Naive thymus-derived CD4-positive, alpha-beta T cell (primary cell): ENCODE measurements at regions of chr3 and their contacts with region 1.

Region 1: DNA sequence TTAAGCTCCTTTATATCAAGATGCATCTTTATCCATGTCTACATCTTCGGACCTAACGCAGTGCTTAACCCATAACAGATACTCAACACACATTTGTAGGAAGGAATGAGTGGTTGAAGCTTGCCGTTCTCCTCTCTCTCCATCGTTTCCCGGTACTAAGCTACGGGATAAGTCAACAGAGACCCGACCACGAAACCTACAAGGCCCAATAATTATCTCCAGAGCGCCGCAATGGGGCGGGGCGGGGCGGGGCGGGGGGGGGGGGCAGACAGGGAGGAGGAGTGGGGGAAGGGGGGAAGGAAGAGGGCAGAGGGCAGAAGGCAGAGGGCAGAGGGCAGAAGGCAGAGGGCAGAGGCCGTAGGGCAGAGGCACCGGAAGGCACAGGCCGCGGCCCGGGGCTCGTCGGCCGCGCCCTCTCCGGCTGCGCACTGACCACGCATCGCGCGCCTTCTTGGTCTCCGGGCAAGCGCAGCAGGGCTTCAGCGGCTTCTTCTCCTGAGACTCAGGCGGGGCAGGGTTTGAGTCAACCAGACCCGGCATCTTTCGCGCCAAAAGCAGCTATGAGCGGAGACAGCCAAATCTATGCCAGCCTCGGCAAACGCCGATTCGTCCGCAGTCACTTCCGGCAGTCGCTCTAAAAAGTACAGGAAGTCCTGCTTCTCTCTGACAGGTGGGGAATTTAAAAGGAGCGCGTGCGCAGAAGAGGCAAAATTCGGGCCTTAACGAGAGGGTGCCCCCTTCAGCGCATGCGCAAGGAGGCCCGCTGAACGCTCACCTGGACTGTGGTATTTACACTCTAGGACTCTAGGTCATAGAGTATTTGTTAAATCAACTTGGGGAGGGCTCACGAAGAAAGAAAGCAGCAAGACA is at the start of gene COX17:
- DNase-seq: peak; percentile 87 to 98 (median 96)
- ATAC-seq: peak; percentile 91
- H3K4me3 ChIP-seq: peak within 1 kb of the TSS; percentile 62
- H3K4me3 Mint-ChIP-seq: peak within 1 kb of the TSS; percentile 78 to 98 (median 90)
- H3K27ac ChIP-seq: peak within 1 kb of the TSS; percentile 72
- H3K27ac Mint-ChIP-seq: peak within 1 kb of the TSS; percentile 94 to 99 (median 96)
- H3K4me1 ChIP-seq: peaks cover 14 to 16% of the 10 kb centered on the region in 2 donors
- H3K4me1 Mint-ChIP-seq: peaks cover 19 to 46% (median 41%) of the 10 kb centered on the region in 7 donors
- H3K27me3 ChIP-seq: no peaks in the 10 kb centered on the region
- H3K27me3 Mint-ChIP-seq: peaks cover 0 to 3% (median 0%) of the 10 kb centered on the region in 5 donors
- total RNA-seq, gene COX17: 25.6 to 55.0 (median 34.8) TPM

Region 2: GRCh38 chr3:118884748-118885206 is 792.2 kb before region 1 on chr3:
- CTCF ChIA-PET with region 1: interaction called, 6 read pairs
- POLR2A ChIA-PET with region 1: no interaction called
- intact Hi-C with region 1: loop called (anchors 1 kb)
- DNase-seq: peak; percentile 58 to 83 (median 76)
- ATAC-seq: peak; percentile 88
- H3K4me3 ChIP-seq: no peak overlapping the region
- H3K4me3 Mint-ChIP-seq: peak overlapping the region in 5 of 10 donors; percentile 21 to 63 (median 40)
- H3K27ac ChIP-seq: no peak overlapping the region
- H3K27ac Mint-ChIP-seq: no peak overlapping the region
- H3K4me1 ChIP-seq: no peaks in the 10 kb centered on the region
- H3K4me1 Mint-ChIP-seq: peaks cover 0 to 18% (median 7%) of the 10 kb centered on the region in 7 donors
- H3K27me3 ChIP-seq: no peaks in the 10 kb centered on the region
- H3K27me3 Mint-ChIP-seq: peaks cover 8 to 16% (median 11%) of the 10 kb centered on the region in 5 donors

Region 3: GRCh38 chr3:119145500-119146191 is 531.4 kb before region 1 on chr3 and contains the start of gene TEX55:
- CTCF ChIA-PET with region 1: no interaction called
- POLR2A ChIA-PET with region 1: no interaction called
- intact Hi-C with region 1: loop called (anchors 1 to 2 kb)
- DNase-seq: peak in 7 of 9 donors; percentile 19 to 48 (median 34)
- ATAC-seq: peak; percentile 57
- H3K4me3 ChIP-seq: no peak within 1 kb of the TSS
- H3K4me3 Mint-ChIP-seq: no peak within 1 kb of the TSS
- H3K27ac ChIP-seq: no peak within 1 kb of the TSS
- H3K27ac Mint-ChIP-seq: peak within 1 kb of the TSS in 2 of 9 donors; percentile 9 to 12
- H3K4me1 ChIP-seq: no peaks in the 10 kb centered on the region
- H3K4me1 Mint-ChIP-seq: peaks cover 0 to 8% (median 5%) of the 10 kb centered on the region in 7 donors
- H3K27me3 ChIP-seq: no peaks in the 10 kb centered on the region
- H3K27me3 Mint-ChIP-seq: no peaks in the 10 kb centered on the region
- total RNA-seq, gene TEX55: not detected

Region 4: DNA sequence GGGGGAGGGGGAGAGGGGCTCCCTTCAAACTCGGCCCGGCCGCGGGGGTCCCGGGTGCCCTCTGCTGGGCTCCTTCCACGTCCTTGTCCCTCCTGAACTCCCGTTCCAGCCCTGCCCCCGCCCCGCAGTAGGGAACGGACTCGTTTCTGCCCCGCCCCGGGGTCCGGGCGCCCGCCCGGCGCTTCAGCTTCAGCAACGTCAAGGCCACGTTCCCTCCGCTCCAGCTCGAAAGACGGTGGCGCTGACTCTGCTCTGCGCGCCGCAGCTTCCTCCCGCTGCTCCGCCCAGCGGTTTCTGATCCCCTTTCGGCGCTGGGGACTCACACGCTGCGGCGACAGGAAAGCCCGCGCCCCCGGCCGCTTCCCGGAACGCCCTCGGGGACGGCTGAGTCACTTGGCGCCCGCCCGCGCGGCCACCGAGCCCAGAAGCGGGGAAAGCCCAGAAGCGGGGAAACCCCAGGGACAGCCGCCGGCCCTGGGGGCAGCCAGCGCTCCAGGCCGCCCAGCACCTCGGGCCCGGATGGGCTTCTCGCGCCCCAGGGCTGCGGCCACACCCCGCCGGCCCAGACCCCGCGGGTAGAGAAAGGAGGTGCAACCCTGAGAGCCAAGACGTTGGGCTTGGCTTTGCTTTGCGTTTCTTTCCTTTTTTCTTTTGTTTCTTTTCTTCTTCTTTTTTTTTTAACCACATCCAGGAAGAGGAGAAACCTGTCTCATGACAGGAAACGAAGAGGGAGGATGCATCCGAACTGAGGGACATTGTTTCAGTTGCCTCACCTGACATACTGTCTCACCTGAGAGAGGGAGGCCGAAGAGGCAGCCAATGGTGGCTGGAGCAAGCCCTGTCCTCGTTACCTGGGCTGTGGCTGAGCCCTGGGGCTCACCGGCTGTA is 353.9 kb before region 1 on chr3:
- CTCF ChIA-PET with region 1: no interaction called
- POLR2A ChIA-PET with region 1: no interaction called
- intact Hi-C with region 1: loop called in 1 of 2 experiments (anchors 1 kb)
- DNase-seq: peak; percentile 77 to 96 (median 81)
- ATAC-seq: peak; percentile 90
- H3K4me3 ChIP-seq: peak overlapping the region; percentile 65
- H3K4me3 Mint-ChIP-seq: peak overlapping the region; percentile 84 to 96 (median 90)
- H3K27ac ChIP-seq: peak overlapping the region; percentile 81
- H3K27ac Mint-ChIP-seq: peak overlapping the region; percentile 90 to 99 (median 95)
- H3K4me1 ChIP-seq: peaks cover 10 to 14% of the 10 kb centered on the region in 2 donors
- H3K4me1 Mint-ChIP-seq: peaks cover 12 to 30% (median 21%) of the 10 kb centered on the region in 7 donors
- H3K27me3 ChIP-seq: no peaks in the 10 kb centered on the region
- H3K27me3 Mint-ChIP-seq: peaks cover 0 to 57% (median 0%) of the 10 kb centered on the region in 5 donors

Region 5: DNA sequence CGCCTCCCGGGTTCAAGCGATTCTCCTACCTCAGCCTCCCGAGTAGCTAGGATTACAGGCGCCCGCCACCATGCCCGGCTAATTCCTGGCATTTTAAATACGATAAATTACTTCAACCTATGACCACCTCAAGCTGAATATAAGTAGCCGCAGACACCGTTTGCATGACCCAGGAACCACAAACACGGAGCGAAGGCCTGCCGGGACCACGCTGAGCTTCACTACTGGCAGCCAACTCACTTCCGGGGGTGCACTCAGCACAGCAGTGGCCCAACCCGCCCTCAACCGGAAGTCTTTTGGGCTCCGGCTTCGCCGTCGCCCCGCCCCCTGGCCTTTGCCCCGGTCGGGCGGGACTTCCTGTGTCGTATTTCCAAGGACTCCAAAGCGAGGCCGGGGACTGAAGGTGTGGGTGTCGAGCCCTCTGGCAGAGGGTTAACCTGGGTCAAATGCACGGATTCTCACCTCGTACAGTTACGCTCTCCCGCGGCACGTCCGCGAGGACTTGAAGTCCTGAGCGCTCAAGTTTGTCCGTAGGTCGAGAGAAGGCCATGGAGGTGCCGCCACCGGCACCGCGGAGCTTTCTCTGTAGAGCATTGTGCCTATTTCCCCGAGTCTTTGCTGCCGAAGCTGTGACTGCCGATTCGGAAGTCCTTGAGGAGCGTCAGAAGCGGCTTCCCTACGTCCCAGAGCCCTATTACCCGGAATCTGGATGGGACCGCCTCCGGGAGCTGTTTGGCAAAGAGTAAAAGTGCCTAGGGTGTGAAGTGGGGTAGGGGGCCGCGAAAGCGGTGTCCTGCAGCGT is 178.6 kb before region 1 on chr3 and contains the start of gene TIMMDC1:
- CTCF ChIA-PET with region 1: no interaction called
- POLR2A ChIA-PET with region 1: interaction called, 3 read pairs
- intact Hi-C with region 1: loop called (anchors 1 kb)
- DNase-seq: peak; percentile 95 to 98 (median 97)
- ATAC-seq: peak; percentile 99
- H3K4me3 ChIP-seq: peak within 1 kb of the TSS; percentile 97
- H3K4me3 Mint-ChIP-seq: peak within 1 kb of the TSS; percentile 95 to 100 (median 99)
- H3K27ac ChIP-seq: peak within 1 kb of the TSS; percentile 96
- H3K27ac Mint-ChIP-seq: peak within 1 kb of the TSS; percentile 98 to 100 (median 99)
- H3K4me1 ChIP-seq: peaks cover 18% of the 10 kb centered on the region in 2 donors
- H3K4me1 Mint-ChIP-seq: peaks cover 22 to 41% (median 34%) of the 10 kb centered on the region in 7 donors
- H3K27me3 ChIP-seq: no peaks in the 10 kb centered on the region
- H3K27me3 Mint-ChIP-seq: no peaks in the 10 kb centered on the region
- total RNA-seq, gene TIMMDC1: 27.1 to 80.1 (median 73.4) TPM

Region 6: DNA sequence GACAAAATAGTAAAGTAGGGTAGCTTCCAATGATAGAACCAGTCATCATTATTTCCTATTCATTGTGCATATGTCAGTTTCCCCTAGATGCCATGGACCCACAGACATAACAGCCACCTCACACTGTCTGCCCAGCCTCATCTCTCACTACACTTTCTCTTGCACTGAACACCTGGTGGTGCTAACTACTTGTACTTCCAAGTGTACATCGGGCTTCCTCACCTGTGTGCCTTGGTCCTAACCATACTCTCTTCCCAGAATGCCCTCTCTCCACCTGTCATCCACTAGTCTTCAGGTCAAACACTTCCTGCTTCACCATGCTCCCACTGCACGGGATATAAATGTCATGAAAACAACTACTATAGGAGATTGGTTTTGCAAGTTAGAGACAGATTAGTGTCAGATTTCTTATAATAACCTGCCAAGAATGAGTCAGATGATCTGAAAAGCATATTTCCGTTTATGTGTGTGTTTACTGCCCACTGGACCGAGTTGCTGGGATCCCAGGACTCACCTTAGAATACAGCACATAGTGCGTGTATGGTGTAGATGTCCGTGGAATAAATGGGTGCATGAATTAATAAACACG is 58.0 kb before region 1 on chr3:
- CTCF ChIA-PET with region 1: no interaction called
- POLR2A ChIA-PET with region 1: no interaction called
- intact Hi-C with region 1: no loop called
- DNase-seq: no peak
- ATAC-seq: no peak
- H3K4me3 ChIP-seq: no peak overlapping the region
- H3K4me3 Mint-ChIP-seq: no peak overlapping the region
- H3K27ac ChIP-seq: no peak overlapping the region
- H3K27ac Mint-ChIP-seq: no peak overlapping the region
- H3K4me1 ChIP-seq: no peaks in the 10 kb centered on the region
- H3K4me1 Mint-ChIP-seq: no peaks in the 10 kb centered on the region
- H3K27me3 ChIP-seq: no peaks in the 10 kb centered on the region
- H3K27me3 Mint-ChIP-seq: peaks cover 0 to 19% (median 5%) of the 10 kb centered on the region in 5 donors

Region 7: DNA sequence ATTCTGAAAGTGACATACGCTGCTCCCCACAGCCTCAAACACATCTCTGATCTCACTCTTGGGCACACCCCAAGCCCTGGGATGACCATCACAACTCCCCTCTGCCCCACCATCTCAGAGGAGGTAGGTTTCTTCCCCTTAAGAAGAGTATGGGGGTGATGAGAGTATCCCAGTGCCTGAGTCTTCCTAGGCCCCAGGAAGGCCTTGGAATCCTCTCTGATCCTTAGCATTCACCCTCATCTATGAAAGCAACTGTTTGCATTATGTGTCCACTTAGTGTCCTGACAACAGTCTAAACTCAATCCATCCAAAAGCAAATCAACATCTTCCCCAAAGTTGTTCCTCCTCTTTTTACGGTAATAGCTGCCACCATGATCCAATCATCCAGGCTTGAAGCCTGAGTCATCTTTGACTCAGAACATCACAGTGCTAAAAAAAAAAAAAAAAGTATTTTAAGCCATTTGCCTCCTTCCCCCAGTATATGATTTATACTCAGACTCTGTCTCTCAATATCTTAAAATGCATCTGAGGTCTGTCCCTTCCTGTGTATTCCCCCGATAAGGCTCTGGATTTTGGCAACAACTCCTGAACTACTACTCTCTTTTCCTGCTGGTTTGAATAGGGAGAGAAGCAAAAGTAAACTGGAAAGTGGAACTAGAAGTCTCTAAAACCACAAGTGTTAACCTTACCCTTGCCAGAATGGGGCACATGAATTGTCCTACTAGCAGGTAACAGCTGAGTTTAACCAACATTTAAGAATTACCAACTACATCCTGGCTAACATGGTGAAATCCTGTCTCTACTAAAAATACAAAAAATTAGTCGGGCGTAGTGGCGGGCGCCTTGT is 39.1 kb before region 1 on chr3:
- CTCF ChIA-PET with region 1: no interaction called
- POLR2A ChIA-PET with region 1: no interaction called
- intact Hi-C with region 1: loop called in 1 of 2 experiments (anchors 1 kb)
- DNase-seq: no peak
- ATAC-seq: peak; percentile 63
- H3K4me3 ChIP-seq: no peak overlapping the region
- H3K4me3 Mint-ChIP-seq: peak overlapping the region in 1 of 10 donors; percentile 59
- H3K27ac ChIP-seq: no peak overlapping the region
- H3K27ac Mint-ChIP-seq: peak overlapping the region in 1 of 9 donors; percentile 88
- H3K4me1 ChIP-seq: no peaks in the 10 kb centered on the region
- H3K4me1 Mint-ChIP-seq: peaks cover 0 to 43% (median 0%) of the 10 kb centered on the region in 7 donors
- H3K27me3 ChIP-seq: no peaks in the 10 kb centered on the region
- H3K27me3 Mint-ChIP-seq: no peaks in the 10 kb centered on the region

Region 8: GRCh38 chr3:120596116-120596852 is 919.3 kb after region 1 on chr3 and contains the start of gene NDUFB4:
- CTCF ChIA-PET with region 1: no interaction called
- POLR2A ChIA-PET with region 1: no interaction called
- intact Hi-C with region 1: loop called in 1 of 2 experiments (anchors 10 kb)
- DNase-seq: peak; percentile 84 to 97 (median 93)
- ATAC-seq: peak; percentile 97
- H3K4me3 ChIP-seq: peak within 1 kb of the TSS; percentile 99
- H3K4me3 Mint-ChIP-seq: peak within 1 kb of the TSS in 8 of 10 donors; percentile 85 to 99 (median 96)
- H3K27ac ChIP-seq: peak within 1 kb of the TSS; percentile 92
- H3K27ac Mint-ChIP-seq: peak within 1 kb of the TSS in 5 of 9 donors; percentile 94 to 99 (median 98)
- H3K4me1 ChIP-seq: peaks cover 25 to 27% of the 10 kb centered on the region in 2 donors
- H3K4me1 Mint-ChIP-seq: peaks cover 0 to 20% (median 11%) of the 10 kb centered on the region in 7 donors
- H3K27me3 ChIP-seq: no peaks in the 10 kb centered on the region
- H3K27me3 Mint-ChIP-seq: peaks cover 0 to 20% (median 0%) of the 10 kb centered on the region in 5 donors
- total RNA-seq, gene NDUFB4: 63.4 to 126 (median 76.2) TPM